A549 (cell line): ENCODE measurements at regions of chr17 and their contacts with region 1.

Region 1: GRCh38 chr17:34199932-34200534 is 55.1 kb upstream of the CCL2 start:
- DNase-seq: peak; percentile 73 to 87
- ATAC-seq: peak; percentile 90 to 97
- H3K4me3 ChIP-seq: no peak overlapping the region
- H3K27ac ChIP-seq: 0 out of 6 replicates have a peak overlapping the region, but pooled peaks of 1 of the 2 experiments have one; percentile 16
- H3K4me1 ChIP-seq: peaks cover 4% of the 10 kb centered on the region; the same call in 1 of the 3 replicates
- CTCF ChIP-seq: peak; percentile 100
- EP300 ChIP-seq: no peak
- POLR2A ChIP-seq: no peak
- RAD21 ChIP-seq: peak; percentile 100

Region 2: DNA sequence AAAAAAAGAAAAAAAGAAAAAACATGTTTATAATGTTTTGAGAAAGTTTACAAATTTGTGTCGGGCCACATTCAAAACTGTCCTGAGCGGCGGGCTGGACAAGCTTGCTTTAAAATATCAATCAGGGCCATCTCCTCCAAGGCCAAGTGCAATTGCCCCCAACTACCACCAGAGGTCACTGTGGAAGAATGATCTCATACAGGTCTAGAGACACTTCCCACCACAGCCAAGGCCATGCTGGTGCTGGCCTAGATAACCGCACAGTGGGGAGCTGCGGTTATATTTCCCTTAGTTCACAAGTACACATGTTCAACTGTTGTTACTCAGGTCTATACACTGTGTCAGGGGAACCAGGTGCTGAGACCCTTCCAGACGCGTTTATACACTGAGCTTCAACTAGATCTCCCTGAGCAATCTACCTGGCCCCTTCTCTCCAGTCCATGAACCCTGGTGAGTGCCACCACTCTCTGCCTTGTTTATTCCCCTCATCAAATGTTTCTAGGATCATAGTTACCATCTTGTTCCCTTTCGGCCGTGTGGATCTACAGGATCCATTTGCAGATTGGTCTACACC is 28.7 kb before region 1 on chr17:
- CTCF ChIA-PET with region 1: interaction called, 29 read pairs
- POLR2A ChIA-PET with region 1: no interaction called
- DNase-seq: peak; percentile 60 to 68
- ATAC-seq: peak; percentile 68 to 97; a peak in 4 of 6 replicates
- H3K4me3 ChIP-seq: no peak overlapping the region
- H3K27ac ChIP-seq: no peak overlapping the region
- H3K4me1 ChIP-seq: no peaks in the 10 kb centered on the region
- CTCF ChIP-seq: peak; percentile 63
- EP300 ChIP-seq: no peak
- POLR2A ChIP-seq: no peak
- RAD21 ChIP-seq: peak; percentile 32 to 60; a peak in 4 of 5 replicates

Region 3: GRCh38 chr17:34230342-34230741 is 30.3 kb after region 1 on chr17:
- CTCF ChIA-PET with region 1: interaction called, 61 read pairs
- POLR2A ChIA-PET with region 1: no interaction called
- DNase-seq: no peak
- ATAC-seq: no peak
- H3K4me3 ChIP-seq: no peak overlapping the region
- H3K27ac ChIP-seq: no peak overlapping the region
- H3K4me1 ChIP-seq: no peaks in the 10 kb centered on the region
- CTCF ChIP-seq: no peak
- EP300 ChIP-seq: no peak
- POLR2A ChIP-seq: no peak
- RAD21 ChIP-seq: no peak

Region 4: GRCh38 chr17:34254651-34255380 is 54.8 kb after region 1 on chr17 and contains the start of gene CCL2:
- CTCF ChIA-PET with region 1: interaction called, 13 read pairs
- POLR2A ChIA-PET with region 1: no interaction called
- DNase-seq: peak; percentile 75 to 76
- ATAC-seq: peak; percentile 72 to 80
- H3K4me3 ChIP-seq: peak within 1 kb of the TSS; percentile 40
- H3K27ac ChIP-seq: peak within 1 kb of the TSS; percentile 73 to 87
- H3K4me1 ChIP-seq: peaks cover 59% of the 10 kb centered on the region
- CTCF ChIP-seq: no peak
- EP300 ChIP-seq: no peak
- POLR2A ChIP-seq: peak; percentile 30; the same call in 1 of the 2 replicates
- RAD21 ChIP-seq: no peak
- polyA plus RNA-seq, gene CCL2: 17.6 and 25.9 TPM in 2 replicates

Region 5: GRCh38 chr17:34306466-34306865 is 106.4 kb after region 1 on chr17:
- CTCF ChIA-PET with region 1: interaction called, 47 read pairs
- POLR2A ChIA-PET with region 1: no interaction called
- DNase-seq: peak; percentile 22 to 38
- ATAC-seq: peak; percentile 82 to 94
- H3K4me3 ChIP-seq: no peak overlapping the region
- H3K27ac ChIP-seq: no peak overlapping the region; a peak in 1 of 6 replicates
- H3K4me1 ChIP-seq: 0 out of 3 replicates have a peak, but pooled peaks cover 4% of the 10 kb centered on the region
- CTCF ChIP-seq: peak; percentile 60
- EP300 ChIP-seq: no peak
- POLR2A ChIP-seq: no peak
- RAD21 ChIP-seq: peak; percentile 73 to 83

Region 6: DNA sequence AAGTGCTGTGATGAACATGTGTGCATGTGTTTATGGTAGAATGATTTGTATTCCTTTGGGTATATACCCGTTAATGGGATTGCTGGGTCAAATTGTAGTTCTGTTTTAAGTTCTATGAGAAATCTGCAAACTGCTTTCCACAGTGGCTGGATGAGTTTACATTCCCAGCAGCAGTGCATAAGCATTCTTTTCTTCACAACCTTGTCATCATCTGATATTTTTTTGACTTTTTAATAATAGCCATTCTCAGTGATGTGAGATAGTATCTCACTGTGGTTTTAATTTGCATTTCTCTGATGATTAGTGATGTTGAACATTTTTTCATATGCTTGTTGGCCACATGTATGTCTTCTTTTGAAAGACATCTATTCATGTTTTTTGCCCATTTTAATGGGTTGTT is 137.7 kb after region 1 on chr17:
- CTCF ChIA-PET with region 1: interaction called, 10 read pairs
- POLR2A ChIA-PET with region 1: no interaction called
- DNase-seq: no peak
- ATAC-seq: no peak
- H3K4me3 ChIP-seq: no peak overlapping the region
- H3K27ac ChIP-seq: no peak overlapping the region
- H3K4me1 ChIP-seq: no peaks in the 10 kb centered on the region
- CTCF ChIP-seq: no peak
- EP300 ChIP-seq: no peak
- POLR2A ChIP-seq: no peak
- RAD21 ChIP-seq: no peak

Region 7: DNA sequence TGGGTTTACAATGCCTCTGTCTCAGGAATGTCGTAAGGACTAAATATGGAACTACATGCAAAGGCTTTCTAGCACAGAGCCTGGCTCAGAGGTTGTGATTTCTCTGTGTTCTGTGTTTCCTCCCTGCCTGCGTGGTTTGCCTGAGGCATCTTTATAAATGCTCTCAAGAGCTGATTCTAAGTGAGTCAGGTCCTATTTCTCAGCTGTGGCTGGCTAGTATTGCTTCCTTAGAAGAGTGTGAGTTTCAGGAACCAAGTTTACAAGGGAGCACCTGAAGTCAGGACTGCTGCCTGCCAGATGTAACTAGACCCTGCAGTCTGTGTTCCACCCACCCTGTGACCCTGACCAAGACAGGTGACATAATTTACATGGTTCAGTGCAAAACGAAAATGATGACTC is 171.0 kb after region 1 on chr17:
- CTCF ChIA-PET with region 1: interaction called, 571 read pairs
- POLR2A ChIA-PET with region 1: no interaction called
- DNase-seq: no peak
- ATAC-seq: no peak
- H3K4me3 ChIP-seq: no peak overlapping the region
- H3K27ac ChIP-seq: no peak overlapping the region
- H3K4me1 ChIP-seq: no peaks in the 10 kb centered on the region
- CTCF ChIP-seq: no peak
- EP300 ChIP-seq: no peak
- POLR2A ChIP-seq: no peak
- RAD21 ChIP-seq: no peak